PC-3 (cell line): ENCODE measurements at regions of chrX and their contacts with region 1.

Region 1: GRCh38 chrX:115650916-115651315 is 89.9 kb downstream of the PLS3 start:
- DNase-seq: peak; percentile 52
- ATAC-seq: peak; percentile 83
- H3K4me3 ChIP-seq: no peak overlapping the region
- H3K27ac ChIP-seq: no peak overlapping the region
- H3K4me1 ChIP-seq: no peaks in the 10 kb centered on the region; the same call in 1 of the 2 replicates
- H3K27me3 ChIP-seq: no peaks in the 10 kb centered on the region
- CTCF ChIP-seq: peak; percentile 65

Region 2: GRCh38 chrX:115679460-115679859 is 28.5 kb after region 1 on chrX:
- CTCF ChIA-PET with region 1: no interaction called
- POLR2A ChIA-PET with region 1: interaction called, 3 read pairs
- intact Hi-C with region 1: loop called (anchors 2 kb)
- DNase-seq: peak; percentile 56
- ATAC-seq: peak; percentile 59
- H3K4me3 ChIP-seq: no peak overlapping the region; the same call in 1 of the 2 replicates
- H3K27ac ChIP-seq: no peak overlapping the region
- H3K4me1 ChIP-seq: no peaks in the 10 kb centered on the region
- H3K27me3 ChIP-seq: no peaks in the 10 kb centered on the region
- CTCF ChIP-seq: peak; percentile 69

Region 3: GRCh38 chrX:115690511-115691216 is 39.7 kb after region 1 on chrX:
- CTCF ChIA-PET with region 1: no interaction called
- POLR2A ChIA-PET with region 1: no interaction called
- intact Hi-C with region 1: loop called (anchors 1 kb)
- DNase-seq: peak; percentile 84
- ATAC-seq: peak; percentile 74
- H3K4me3 ChIP-seq: no peak overlapping the region
- H3K27ac ChIP-seq: no peak overlapping the region
- H3K4me1 ChIP-seq: peaks cover 6% of the 10 kb centered on the region; the same call in 1 of the 2 replicates
- H3K27me3 ChIP-seq: no peaks in the 10 kb centered on the region
- CTCF ChIP-seq: peak; percentile 81

Region 4: DNA sequence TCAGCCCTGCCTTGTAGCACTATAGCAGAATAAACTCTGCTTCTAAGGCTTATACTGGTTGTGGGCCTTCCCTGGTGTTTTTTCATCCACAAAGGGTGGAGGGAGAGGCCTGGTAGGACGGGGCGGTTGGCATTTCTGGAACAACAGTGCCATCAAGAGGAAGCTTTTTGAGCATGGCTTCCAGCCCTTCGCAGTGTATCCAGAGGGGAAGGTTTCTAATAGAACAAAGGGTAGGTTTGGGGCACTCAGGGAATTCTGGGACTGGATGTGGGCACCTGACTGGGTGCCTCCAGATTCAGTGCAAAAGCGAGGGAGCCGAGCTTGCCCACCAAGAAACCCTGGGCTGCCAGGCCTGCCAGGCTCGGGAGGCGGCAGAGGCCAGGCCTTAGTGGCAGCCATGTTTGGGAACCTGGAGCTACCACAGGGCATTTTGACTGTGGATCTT is 290.0 kb after region 1 on chrX:
- CTCF ChIA-PET with region 1: no interaction called
- POLR2A ChIA-PET with region 1: no interaction called
- intact Hi-C with region 1: loop called (anchors 10 kb)
- DNase-seq: peak; percentile 81
- ATAC-seq: peak; percentile 88
- H3K4me3 ChIP-seq: no peak overlapping the region
- H3K27ac ChIP-seq: no peak overlapping the region
- H3K4me1 ChIP-seq: peaks cover 5% of the 10 kb centered on the region
- H3K27me3 ChIP-seq: no peaks in the 10 kb centered on the region
- CTCF ChIP-seq: peak; percentile 60